ENCODE measurements at regions of chr13 and their contacts with region 1.

Region 1: DNA sequence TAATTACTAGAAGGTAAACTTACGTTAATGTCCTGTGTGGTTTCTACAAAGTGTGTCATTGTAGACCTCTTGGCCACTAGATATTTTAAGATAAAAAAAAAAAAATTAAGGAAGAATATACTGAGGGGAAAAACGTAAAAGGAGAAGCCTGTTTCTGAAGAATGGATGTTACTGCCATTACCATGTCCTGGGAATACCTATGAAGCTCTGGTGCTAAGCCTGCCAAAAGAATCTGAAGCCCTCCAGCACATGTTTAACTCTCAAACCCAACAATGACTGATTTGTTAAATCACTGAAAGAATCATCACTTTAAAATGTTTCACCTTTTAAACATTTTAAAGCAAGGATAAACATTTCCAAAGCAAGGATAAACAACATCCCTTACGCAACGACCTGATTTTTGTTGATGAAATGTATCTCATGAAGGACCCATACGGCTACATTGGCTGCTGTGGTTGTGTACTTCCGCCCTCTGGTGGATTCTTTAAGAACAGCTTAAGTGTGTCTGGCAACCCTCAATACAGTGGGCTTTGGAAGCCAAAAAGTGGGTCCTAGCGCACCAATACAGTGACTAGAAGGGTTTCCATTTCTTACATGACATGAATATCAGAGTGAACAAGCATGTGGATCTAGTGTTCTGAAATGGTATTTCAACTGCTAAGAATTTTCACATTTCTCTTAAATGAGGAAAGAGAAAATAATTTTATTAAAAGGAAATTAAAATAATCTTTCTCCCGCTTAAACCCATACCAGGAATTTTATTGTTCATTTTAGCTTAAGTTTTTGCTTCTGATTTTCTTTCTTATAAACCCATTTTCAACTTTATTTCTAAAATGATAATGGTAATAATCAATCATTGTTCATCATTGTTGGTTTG is 74.5 kb upstream of the RAP2A start:
- DNase-seq: no peak
- H3K4me3 ChIP-seq: no peak overlapping the region
- CTCF ChIP-seq: peak; percentile 73

Region 2: DNA sequence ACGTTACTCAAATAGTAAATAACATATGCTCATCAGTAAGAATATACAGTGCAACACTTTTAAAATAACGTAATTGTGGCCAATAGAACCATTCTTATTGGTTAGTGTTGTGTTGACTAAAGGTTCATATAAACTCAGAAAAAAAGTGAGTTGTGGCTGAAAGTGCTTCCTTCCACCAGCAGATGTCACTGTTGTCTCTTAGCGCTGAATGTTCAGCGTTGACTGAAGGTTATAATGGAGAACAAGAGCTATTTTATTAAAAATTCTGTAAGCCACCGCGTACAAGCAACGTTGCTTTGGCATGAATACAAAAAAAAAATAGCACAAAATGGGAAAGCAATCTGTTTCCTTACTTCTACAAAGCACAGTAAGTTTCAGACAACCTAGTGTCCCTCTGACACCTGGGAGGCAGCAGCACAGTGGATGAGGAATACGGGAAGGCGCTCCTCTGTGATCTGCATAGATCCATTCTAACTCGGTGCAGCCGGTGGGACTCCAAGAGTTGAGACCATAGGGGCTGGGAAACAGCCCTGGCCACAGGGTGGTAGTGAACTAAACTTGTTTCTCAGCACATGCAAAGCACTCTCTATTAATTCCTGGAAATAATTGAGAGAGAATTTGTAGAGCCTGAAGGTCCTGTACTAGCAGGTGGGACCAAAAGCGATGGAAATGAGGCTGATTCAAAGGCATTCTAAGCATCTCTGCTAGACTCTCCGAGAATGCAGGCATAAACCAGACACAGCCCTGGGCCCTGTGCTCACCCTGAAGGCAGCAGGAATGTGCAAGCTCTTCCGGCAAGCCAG is 341.2 kb before region 1 on chr13:
- CTCF ChIA-PET with region 1: interaction called, 12 read pairs
- POLR2A ChIA-PET with region 1: no interaction called
- DNase-seq: no peak
- H3K4me3 ChIP-seq: no peak overlapping the region
- CTCF ChIP-seq: peak; percentile 77

Region 3: GRCh38 chr13:97221989-97222700 is 137.3 kb before region 1 on chr13 and contains the start of gene MBNL2:
- CTCF ChIA-PET with region 1: interaction called, 17 read pairs
- POLR2A ChIA-PET with region 1: no interaction called
- DNase-seq: peak; percentile 75
- H3K4me3 ChIP-seq: peak within 1 kb of the TSS; percentile 73
- CTCF ChIP-seq: no peak

Region 4: GRCh38 chr13:97344265-97345175 is 14.9 kb before region 1 on chr13:
- CTCF ChIA-PET with region 1: interaction called, 10 read pairs
- POLR2A ChIA-PET with region 1: no interaction called
- DNase-seq: no peak
- H3K4me3 ChIP-seq: no peak overlapping the region
- CTCF ChIP-seq: peak; percentile 64

Region 5: DNA sequence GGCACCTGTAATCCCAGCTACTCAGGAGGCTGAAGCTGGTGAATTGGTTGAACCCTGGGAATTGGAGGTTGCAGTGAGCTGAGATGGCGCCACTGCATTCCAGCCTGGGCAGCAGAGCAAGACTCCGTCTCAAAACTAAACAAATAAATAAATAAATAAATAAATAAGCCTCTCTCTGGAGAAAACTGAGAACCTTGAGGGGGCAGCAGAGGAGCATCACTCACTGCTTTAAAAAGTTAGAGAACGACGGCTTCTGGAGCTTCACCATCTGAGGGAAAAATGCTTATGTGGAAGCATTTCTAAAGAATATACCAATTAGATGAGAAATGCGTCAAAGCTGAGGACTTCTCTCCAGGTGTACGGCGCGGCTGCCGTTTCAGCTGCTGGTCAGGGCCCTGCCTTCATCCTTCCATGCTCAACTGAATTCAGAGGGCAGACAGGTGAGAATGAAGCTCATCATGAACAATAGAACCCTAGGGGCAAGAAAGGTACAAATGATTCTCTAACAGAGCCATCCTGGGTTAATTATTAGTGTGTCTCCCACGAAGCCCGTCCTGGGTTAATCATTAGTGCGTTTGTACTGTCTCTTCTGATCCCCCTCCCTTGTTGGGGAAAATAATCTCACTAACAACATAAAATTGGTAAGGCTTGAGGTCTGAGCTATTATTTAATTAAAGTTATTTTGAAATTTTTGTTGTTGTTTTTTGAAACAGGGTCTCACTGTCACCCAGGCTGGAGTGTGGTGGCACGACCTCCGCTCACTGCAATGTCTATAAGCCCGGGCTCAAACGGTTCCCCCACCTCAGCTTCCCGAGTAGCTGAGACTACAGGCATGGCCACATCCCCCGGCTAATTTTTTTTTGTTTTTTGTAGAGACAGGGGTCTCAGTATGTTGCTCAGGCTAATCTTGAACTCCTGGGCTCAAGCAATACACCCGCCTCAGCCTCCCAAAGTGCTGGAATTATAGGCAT is 674.1 kb after region 1 on chr13:
- CTCF ChIA-PET with region 1: no interaction called
- POLR2A ChIA-PET with region 1: no interaction called
- DNase-seq: peak; percentile 19
- H3K4me3 ChIP-seq: no peak overlapping the region
- CTCF ChIP-seq: peak; percentile 35

Measured in AG04449 (cell line).